Heart right ventricle (tissue), 16 donors: ENCODE measurements at regions of chr22 and their contacts with region 1.

Region 1: GRCh38 chr22:26461188-26461810 is 22.3 kb downstream of the HPS4 start:
- DNase-seq: peak; percentile 49 to 50
- ATAC-seq: peak in 7 of 8 donors; percentile 45 to 72 (median 61)
- H3K4me3 ChIP-seq: no peak overlapping the region
- H3K27ac ChIP-seq: no peak overlapping the region
- H3K4me1 ChIP-seq: peaks cover 0 to 21% (median 3%) of the 10 kb centered on the region in 9 donors
- H3K27me3 ChIP-seq: no peaks in the 10 kb centered on the region
- CTCF ChIP-seq: peak; percentile 42 to 80 (median 72)

Region 2: DNA sequence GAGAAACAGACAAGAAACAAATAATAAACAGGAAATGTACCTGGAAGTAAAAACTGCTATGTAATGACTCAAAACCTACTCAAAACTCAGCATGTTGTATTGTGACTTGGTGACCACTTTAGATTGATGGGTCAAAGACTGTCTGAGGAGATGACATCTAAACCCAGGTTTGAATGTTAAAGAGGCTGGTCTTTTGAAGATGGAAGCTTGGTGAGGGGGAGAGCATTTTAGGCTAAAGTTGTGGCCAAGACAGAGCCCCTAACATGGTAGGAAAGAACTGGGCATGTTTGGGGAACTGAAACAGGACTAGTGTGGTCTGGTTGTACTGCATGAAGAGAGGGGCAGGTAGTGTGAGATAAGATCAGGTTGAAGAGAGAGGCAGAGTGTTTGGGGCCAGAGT is 804.6 kb before region 1 on chr22:
- intact Hi-C with region 1: loop called in 1 of 10 experiments (anchors 5 kb)
- DNase-seq: no peak
- ATAC-seq: no peak
- H3K4me3 ChIP-seq: no peak overlapping the region
- H3K27ac ChIP-seq: no peak overlapping the region
- H3K4me1 ChIP-seq: peaks cover 0 to 20% (median 13%) of the 10 kb centered on the region in 9 donors
- H3K27me3 ChIP-seq: no peaks in the 10 kb centered on the region
- CTCF ChIP-seq: no peak

Region 3: DNA sequence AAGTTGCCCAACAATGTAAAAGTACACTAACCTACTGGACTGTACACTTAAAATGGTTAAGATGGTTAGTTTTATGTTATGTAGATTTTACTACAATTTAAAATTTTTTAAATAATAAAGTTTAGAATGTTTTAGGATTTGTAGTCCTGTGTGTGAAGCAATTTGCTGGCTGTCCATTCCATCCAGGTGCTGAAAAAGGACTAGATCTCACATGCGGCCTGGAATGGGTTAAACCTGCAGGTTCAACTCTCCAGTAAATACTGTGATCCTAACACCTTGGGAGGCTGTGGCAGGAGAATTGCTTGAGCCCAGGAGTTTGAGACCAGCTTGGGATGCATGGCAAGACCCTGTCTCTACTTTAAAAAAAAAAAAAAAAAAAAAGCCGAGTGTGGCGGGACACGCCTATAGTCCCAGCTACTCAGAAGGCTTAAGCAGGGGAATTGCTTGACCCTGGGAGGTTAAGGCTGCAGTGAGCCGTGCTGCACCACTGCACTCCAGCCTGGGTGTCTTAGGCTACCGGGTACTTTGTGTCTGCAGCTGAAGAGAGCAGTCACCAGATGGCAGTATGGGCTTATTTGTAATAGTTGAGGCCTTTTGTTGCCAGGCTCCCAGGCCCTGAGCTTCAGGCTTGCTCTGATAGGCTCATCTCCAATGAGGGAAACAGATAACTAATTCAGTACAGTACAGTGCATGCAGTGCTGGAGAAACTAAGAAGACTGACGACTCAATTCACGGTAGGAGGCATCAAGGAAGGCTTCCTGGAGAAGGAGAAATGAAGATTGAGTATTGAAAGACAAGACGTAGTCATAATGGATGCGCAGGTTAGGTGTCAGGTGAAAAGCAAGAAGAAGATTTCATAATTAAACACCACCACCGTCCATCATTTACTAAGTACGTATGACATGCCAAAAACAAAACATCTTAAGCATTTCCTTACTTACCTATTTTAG is 97.0 kb before region 1 on chr22:
- intact Hi-C with region 1: loop called in 8 of 10 experiments (anchors 2 to 10 kb)
- DNase-seq: peak; percentile 17 to 53
- ATAC-seq: peak; percentile 72 to 91 (median 84)
- H3K4me3 ChIP-seq: no peak overlapping the region
- H3K27ac ChIP-seq: no peak overlapping the region
- H3K4me1 ChIP-seq: peaks cover 2 to 11% (median 5%) of the 10 kb centered on the region in 9 donors
- H3K27me3 ChIP-seq: peaks cover 0 to 43% (median 27%) of the 10 kb centered on the region in 7 donors
- CTCF ChIP-seq: peak; percentile 27 to 75 (median 65)

Region 4: GRCh38 chr22:26374391-26375026 is 86.8 kb before region 1 on chr22:
- intact Hi-C with region 1: loop called in 4 of 10 experiments (anchors 5 to 10 kb)
- DNase-seq: no peak
- ATAC-seq: no peak
- H3K4me3 ChIP-seq: no peak overlapping the region
- H3K27ac ChIP-seq: no peak overlapping the region
- H3K4me1 ChIP-seq: peaks cover 0 to 6% (median 0%) of the 10 kb centered on the region in 9 donors
- H3K27me3 ChIP-seq: peaks cover 0 to 84% (median 39%) of the 10 kb centered on the region in 7 donors
- CTCF ChIP-seq: no peak

Region 5: GRCh38 chr22:26398741-26399153 is 62.6 kb before region 1 on chr22:
- intact Hi-C with region 1: loop called in 8 of 10 experiments (anchors 2 to 10 kb)
- DNase-seq: peak; percentile 21 to 43
- ATAC-seq: peak in 6 of 8 donors; percentile 41 to 76 (median 55)
- H3K4me3 ChIP-seq: no peak overlapping the region
- H3K27ac ChIP-seq: no peak overlapping the region
- H3K4me1 ChIP-seq: no peaks in the 10 kb centered on the region
- H3K27me3 ChIP-seq: peaks cover 0 to 35% (median 11%) of the 10 kb centered on the region in 7 donors
- CTCF ChIP-seq: peak; percentile 35 to 75 (median 62)

Region 6: GRCh38 chr22:26428515-26429457 is 32.5 kb before region 1 on chr22 and contains the start of gene ASPHD2:
- intact Hi-C with region 1: no loop called
- DNase-seq: peak; percentile 26 to 54
- ATAC-seq: peak; percentile 63 to 83 (median 71)
- H3K4me3 ChIP-seq: peak within 1 kb of the TSS; percentile 26 to 69 (median 58)
- H3K27ac ChIP-seq: peak within 1 kb of the TSS in 8 of 10 donors; percentile 18 to 92 (median 54)
- H3K4me1 ChIP-seq: peaks cover 0 to 33% (median 0%) of the 10 kb centered on the region in 9 donors
- H3K27me3 ChIP-seq: peaks cover 0 to 34% (median 17%) of the 10 kb centered on the region in 7 donors
- CTCF ChIP-seq: no peak
- total RNA-seq, gene ASPHD2: 0.07 to 1.8 (median 0.13) TPM in 8 of 10 donors, not detected in the others

Region 7: DNA sequence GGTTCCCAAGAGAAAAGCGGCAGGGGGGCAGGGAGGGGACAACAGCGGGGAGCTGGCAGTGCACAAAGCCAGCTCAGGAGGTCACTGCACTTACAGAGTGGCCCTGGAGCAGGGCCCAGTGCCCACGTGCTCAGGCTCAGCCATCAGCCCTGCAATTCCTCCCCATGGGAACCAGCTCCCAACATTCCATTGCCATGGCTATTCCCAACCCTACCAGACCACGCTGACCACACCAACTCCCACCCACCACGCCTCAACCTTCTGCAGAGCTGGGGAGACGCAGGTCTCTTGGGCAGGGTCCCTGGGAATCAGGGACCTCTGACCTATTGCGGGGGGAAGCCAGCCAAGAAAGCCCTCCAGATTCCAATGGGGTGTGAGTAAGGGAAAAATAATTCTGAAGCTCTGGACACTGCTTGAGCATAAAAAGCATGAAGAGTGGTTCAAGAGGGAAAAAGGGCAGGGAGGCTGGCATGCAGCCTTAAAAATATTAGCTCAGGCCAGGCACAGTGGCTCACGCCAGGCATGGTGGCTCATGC is 89.3 kb after region 1 on chr22:
- intact Hi-C with region 1: no loop called
- DNase-seq: peak; percentile 67
- ATAC-seq: peak; percentile 79 to 92 (median 90)
- H3K4me3 ChIP-seq: peak overlapping the region in 1 of 10 donors; percentile 14
- H3K27ac ChIP-seq: peak overlapping the region; percentile 42 to 88 (median 80)
- H3K4me1 ChIP-seq: peaks cover 10 to 78% (median 67%) of the 10 kb centered on the region in 9 donors
- H3K27me3 ChIP-seq: no peaks in the 10 kb centered on the region
- CTCF ChIP-seq: no peak